H1 (cell line): ENCODE measurements at regions of chr20 and their contacts with region 1.

Region 1: DNA sequence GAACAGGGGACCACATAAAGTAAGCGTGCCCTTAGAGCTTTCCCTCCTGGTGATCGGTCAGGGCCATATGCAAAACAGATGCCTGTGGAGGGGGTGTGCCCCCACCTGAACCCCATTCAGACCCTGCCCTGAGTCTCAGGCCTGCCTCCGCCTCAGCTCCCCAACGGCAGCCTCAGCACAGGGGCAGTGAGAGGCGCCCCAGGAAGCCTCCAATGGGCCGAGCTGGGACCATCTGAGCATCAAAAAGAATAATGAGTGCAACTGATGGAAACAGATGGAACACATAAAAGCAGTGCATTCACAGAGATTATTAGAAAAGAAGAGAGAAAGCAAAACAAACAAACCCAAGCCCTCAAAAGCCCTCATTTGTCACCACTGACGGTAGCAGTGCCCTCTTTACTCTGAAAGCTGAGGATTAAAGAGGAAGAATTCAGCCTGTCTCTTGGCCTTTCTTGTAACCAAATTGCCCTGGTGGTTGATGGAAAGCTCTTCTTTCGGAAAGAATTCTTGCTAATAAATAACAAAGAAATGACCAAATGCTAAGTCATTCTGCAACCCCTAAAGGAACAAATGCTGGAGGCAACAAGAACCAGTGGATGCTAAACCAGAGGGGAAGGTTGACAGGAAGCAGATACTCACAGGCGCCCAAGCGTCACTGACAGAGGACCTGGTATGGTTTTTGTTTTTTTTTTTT is 6.8 kb downstream of the ADISSP start:
- DNase-seq: no peak
- H3K4me3 ChIP-seq: no peak overlapping the region
- H3K27ac ChIP-seq: no peak overlapping the region
- H3K4me1 ChIP-seq: no peaks in the 10 kb centered on the region
- H3K27me3 ChIP-seq: no peaks in the 10 kb centered on the region
- CTCF ChIP-seq: no peak
- EP300 ChIP-seq: no peak
- POLR2A ChIP-seq: no peak
- RAD21 ChIP-seq: no peak

Region 2: GRCh38 chr20:3679749-3680700 is 80.8 kb before region 1 on chr20:
- CTCF ChIA-PET with region 1: interaction called, 12 read pairs
- POLR2A ChIA-PET with region 1: no interaction called
- DNase-seq: no peak
- H3K4me3 ChIP-seq: no peak overlapping the region
- H3K27ac ChIP-seq: no peak overlapping the region
- H3K4me1 ChIP-seq: peaks cover 5 to 29% (median 17%) of the 10 kb centered on the region in 4 experiments
- H3K27me3 ChIP-seq: peaks cover 0 to 13% (median 5%) of the 10 kb centered on the region in 4 experiments; a peak in 5 of 7 replicates
- CTCF ChIP-seq: no peak
- EP300 ChIP-seq: no peak
- POLR2A ChIP-seq: no peak
- RAD21 ChIP-seq: no peak